Endothelial cell of umbilical vein (primary cell): ENCODE measurements at regions of chr21 and their contacts with region 1.

Region 1: DNA sequence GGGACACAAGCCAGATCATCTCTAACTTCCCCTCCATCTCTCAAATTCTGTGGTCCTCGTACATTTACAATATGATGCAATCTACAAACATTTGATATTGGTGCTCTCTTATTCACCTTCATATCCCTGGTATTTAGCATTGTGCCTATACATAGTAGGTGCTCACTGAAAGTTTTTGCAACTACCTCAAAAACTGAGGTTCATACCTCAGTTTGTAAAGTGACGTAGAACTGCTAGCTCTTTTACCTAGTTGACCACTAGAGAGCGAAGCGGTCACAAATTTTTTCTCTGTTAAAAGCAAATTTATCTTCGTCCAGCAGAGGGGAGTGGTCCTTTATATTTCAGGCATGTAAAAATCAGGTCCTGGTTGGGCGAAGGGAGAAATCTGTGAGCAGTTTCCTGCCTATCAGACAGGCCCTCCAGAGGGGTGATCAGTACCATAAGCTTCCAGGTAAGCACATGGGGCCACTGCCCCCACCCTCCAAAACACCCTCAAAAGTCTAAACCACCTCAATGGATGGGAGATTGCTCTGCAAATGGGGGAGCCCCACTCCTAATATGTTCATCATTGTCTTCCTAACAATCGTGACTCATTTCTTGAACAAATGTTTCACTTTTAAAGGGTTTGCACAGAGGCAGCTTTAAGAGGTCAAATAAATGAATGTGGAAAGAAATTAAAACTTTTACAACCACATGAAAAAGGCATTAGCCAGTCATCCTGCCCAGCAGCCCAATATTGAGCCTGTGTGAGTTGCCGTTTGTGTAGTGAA is 10.6 kb upstream of the HLCS start:
- DNase-seq: peak; percentile 88
- H3K4me3 ChIP-seq: no peak overlapping the region
- H3K27ac ChIP-seq: no peak overlapping the region
- H3K4me1 ChIP-seq: peaks cover 14% of the 10 kb centered on the region
- H3K27me3 ChIP-seq: no peaks in the 10 kb centered on the region
- CTCF ChIP-seq: peak; percentile 58 to 68
- POLR2A ChIP-seq: no peak

Region 2: DNA sequence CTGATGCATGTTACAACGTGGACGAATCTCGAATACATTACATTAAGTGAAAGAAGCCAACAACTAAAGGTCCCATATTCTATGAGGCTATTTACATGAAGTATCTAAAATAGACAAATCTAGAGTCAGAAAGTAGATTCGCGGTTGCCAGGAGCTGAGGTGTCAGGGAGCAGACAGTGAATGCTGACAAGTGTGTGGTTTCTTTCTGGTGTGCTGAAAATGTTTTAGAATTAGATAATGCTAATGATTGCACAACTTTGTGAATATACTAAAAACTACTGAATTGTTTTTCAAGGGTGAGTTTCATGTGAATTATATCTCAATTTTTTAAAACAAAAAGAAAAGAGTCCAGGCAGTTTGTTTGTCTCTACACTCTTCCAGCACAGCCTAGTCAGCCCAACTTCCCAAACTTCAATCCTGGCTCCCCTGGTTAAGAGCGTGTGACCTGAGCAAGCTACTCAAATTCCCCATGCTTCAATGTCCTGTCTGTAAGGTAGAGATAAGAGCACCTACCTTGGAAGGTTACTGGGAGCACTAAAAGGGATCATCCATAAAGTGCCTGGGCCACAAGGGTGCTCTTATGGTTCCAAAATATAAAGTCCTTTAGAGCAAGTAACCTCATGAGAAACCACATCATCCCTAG is 31.4 kb before region 1 on chr21:
- CTCF ChIA-PET with region 1: interaction called, 11 read pairs
- POLR2A ChIA-PET with region 1: no interaction called
- dilution Hi-C with region 1: no loop called
- intact Hi-C with region 1: no loop called
- DNase-seq: no peak
- H3K4me3 ChIP-seq: no peak overlapping the region
- H3K27ac ChIP-seq: no peak overlapping the region
- H3K4me1 ChIP-seq: peaks cover 12% of the 10 kb centered on the region
- H3K27me3 ChIP-seq: no peaks in the 10 kb centered on the region
- CTCF ChIP-seq: no peak
- POLR2A ChIP-seq: no peak

Region 3: GRCh38 chr21:36966066-36966820 is 10.8 kb before region 1 on chr21 and contains the start of gene HLCS:
- CTCF ChIA-PET with region 1: interaction called, 39 read pairs
- POLR2A ChIA-PET with region 1: no interaction called
- dilution Hi-C with region 1: no loop called
- intact Hi-C with region 1: no loop called
- DNase-seq: peak; percentile 28
- H3K4me3 ChIP-seq: peak within 1 kb of the TSS; percentile 57 to 64 (median 63)
- H3K27ac ChIP-seq: peak within 1 kb of the TSS; percentile 70
- H3K4me1 ChIP-seq: peaks cover 9% of the 10 kb centered on the region
- H3K27me3 ChIP-seq: no peaks in the 10 kb centered on the region
- CTCF ChIP-seq: peak in 1 of 2 donors; percentile 31
- POLR2A ChIP-seq: peak; percentile 60
- total RNA-seq, gene HLCS: 13.9 and 17.2 TPM in 2 replicates

Region 4: DNA sequence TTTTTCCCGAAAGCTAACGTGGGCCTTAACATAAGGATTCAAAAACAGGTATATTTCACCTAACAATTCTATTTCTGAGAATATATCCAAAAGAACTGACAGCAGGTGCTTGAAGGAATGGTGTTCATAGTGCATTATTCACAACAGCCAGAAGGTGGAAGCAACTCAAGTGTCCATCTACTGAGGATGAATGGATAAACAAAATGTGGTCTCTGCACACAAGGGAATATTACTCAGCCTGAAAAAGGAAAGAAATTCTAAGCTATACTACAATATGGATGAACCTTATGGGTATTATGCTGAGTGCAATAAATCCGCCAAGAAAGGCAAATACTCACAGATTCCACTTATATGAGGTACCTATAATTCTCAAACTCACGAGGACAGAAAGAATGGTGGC is 23.3 kb after region 1 on chr21:
- CTCF ChIA-PET with region 1: interaction called, 27 read pairs
- POLR2A ChIA-PET with region 1: interaction called, 5 read pairs
- dilution Hi-C with region 1: no loop called
- intact Hi-C with region 1: no loop called
- DNase-seq: no peak
- H3K4me3 ChIP-seq: no peak overlapping the region
- H3K27ac ChIP-seq: no peak overlapping the region
- H3K4me1 ChIP-seq: peaks cover 3% of the 10 kb centered on the region
- H3K27me3 ChIP-seq: peaks cover under 1 to 6% of the 10 kb centered on the region in 2 experiments
- CTCF ChIP-seq: no peak
- POLR2A ChIP-seq: no peak

Region 5: DNA sequence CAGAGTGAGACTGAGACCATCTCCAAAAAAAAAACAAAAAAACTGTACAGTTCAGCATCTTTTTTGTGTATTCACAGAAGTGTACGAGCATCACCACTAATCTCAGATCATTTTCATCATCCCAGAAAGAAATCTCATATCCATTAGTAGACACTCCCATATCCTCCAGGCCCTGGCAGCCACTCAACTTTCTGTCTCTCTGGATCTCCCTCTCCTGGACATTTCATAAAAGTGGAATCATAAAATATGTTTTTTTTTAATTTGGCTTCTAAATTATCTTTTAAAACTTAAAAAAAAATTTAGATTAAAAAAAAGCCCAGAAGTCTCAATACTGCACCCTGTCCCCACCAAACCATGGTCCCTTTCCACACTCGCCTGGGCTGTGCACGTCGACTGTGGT is 51.5 kb after region 1 on chr21:
- CTCF ChIA-PET with region 1: interaction called, 10 read pairs
- POLR2A ChIA-PET with region 1: no interaction called
- dilution Hi-C with region 1: no loop called
- intact Hi-C with region 1: no loop called
- DNase-seq: no peak
- H3K4me3 ChIP-seq: no peak overlapping the region
- H3K27ac ChIP-seq: no peak overlapping the region
- H3K4me1 ChIP-seq: no peaks in the 10 kb centered on the region
- H3K27me3 ChIP-seq: peaks cover 4 to 7% of the 10 kb centered on the region in 2 experiments
- CTCF ChIP-seq: no peak
- POLR2A ChIP-seq: no peak

Region 6: GRCh38 chr21:37153196-37153934 is 176.3 kb after region 1 on chr21:
- CTCF ChIA-PET with region 1: interaction called, 8 read pairs
- POLR2A ChIA-PET with region 1: no interaction called
- dilution Hi-C with region 1: no loop called
- intact Hi-C with region 1: loop called (anchors 5 kb)
- DNase-seq: peak; percentile 82
- H3K4me3 ChIP-seq: no peak overlapping the region
- H3K27ac ChIP-seq: peak overlapping the region; percentile 66
- H3K4me1 ChIP-seq: peaks cover 27% of the 10 kb centered on the region
- H3K27me3 ChIP-seq: no peaks in the 10 kb centered on the region
- CTCF ChIP-seq: no peak
- POLR2A ChIP-seq: no peak

Region 7: DNA sequence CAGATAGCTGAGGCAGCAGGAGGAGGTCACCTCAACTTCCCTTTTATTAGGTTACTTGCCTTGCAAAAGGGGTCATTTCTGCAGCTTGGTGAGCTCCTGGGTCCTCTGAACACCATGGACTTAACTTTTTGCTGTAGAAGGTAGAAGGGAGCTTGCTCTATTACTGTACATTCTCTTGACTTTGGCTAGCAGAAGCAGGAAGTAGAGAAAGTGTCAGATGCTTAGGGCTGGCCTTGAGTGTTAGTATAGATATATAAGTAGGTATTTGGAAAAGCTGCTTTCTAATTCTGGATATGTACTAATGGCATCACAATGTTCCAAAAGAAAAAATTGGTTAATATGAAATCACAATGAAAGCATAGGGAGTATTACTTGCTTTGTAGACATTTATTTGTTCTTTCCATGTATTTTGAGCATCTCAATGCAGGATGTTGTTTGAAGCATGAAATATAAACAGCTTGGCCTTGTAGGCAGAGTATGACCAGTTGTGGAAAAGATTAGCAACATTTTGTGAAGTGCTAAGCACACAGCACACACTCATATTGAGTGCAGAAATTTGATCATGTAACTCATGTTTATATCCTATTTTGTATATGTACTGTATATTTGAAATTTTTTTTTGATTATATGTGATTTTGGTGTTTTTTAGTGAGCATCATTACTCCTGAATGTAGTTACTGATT is 498.3 kb after region 1 on chr21:
- CTCF ChIA-PET with region 1: no interaction called
- POLR2A ChIA-PET with region 1: no interaction called
- dilution Hi-C with region 1: no loop called
- intact Hi-C with region 1: no loop called
- DNase-seq: no peak
- H3K4me3 ChIP-seq: no peak overlapping the region
- H3K27ac ChIP-seq: no peak overlapping the region
- H3K4me1 ChIP-seq: peaks cover 4% of the 10 kb centered on the region
- H3K27me3 ChIP-seq: no peaks in the 10 kb centered on the region
- CTCF ChIP-seq: no peak
- POLR2A ChIP-seq: no peak

Region 8: DNA sequence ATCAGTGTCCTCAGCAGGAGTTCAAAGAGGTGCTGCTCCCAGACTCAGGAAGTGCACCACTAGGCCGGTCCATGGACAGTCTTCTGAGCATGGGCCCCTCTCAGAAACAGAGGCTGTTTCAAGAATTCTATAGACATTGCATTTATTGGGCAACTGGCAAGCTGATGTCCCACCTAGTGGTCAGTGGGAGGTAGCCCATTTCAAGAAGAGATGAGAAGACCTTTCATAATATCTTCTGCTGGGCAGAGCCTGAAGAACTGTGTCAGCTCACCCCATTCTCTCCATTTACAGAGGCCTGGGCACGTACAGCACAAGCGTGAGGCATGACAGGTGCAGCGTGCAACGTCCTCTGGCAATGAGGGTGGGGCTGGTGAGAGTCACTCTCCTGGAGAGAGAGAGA is 605.5 kb after region 1 on chr21:
- CTCF ChIA-PET with region 1: no interaction called
- POLR2A ChIA-PET with region 1: no interaction called
- dilution Hi-C with region 1: no loop called
- intact Hi-C with region 1: loop called (anchors 1 kb)
- DNase-seq: peak; percentile 69
- H3K4me3 ChIP-seq: no peak overlapping the region
- H3K27ac ChIP-seq: no peak overlapping the region
- H3K4me1 ChIP-seq: peaks cover 13% of the 10 kb centered on the region
- H3K27me3 ChIP-seq: no peaks in the 10 kb centered on the region
- CTCF ChIP-seq: peak; percentile 68 to 76
- POLR2A ChIP-seq: no peak